Activated CD4-positive, alpha-beta T cell treated with anti-CD3 and anti-CD28 coated beads, Interleukin-2, amount 10 ng/mL, durations not matched to agents 24 days and 14 days (primary cell): ENCODE measurements at regions of chr15 and their contacts with region 1.

Region 1: GRCh38 chr15:72272213-72273002 is at the start of gene PARP6:
- DNase-seq: peak; percentile 100
- H3K4me3 Mint-ChIP-seq: peak within 1 kb of the TSS; percentile 94
- H3K27ac Mint-ChIP-seq: peak within 1 kb of the TSS; percentile 88
- H3K4me1 Mint-ChIP-seq: peaks cover 32% of the 10 kb centered on the region
- H3K27me3 Mint-ChIP-seq: peaks cover 3% of the 10 kb centered on the region
- total RNA-seq, gene PARP6: 69.7 and 78.6 TPM in 2 replicates

Region 2: DNA sequence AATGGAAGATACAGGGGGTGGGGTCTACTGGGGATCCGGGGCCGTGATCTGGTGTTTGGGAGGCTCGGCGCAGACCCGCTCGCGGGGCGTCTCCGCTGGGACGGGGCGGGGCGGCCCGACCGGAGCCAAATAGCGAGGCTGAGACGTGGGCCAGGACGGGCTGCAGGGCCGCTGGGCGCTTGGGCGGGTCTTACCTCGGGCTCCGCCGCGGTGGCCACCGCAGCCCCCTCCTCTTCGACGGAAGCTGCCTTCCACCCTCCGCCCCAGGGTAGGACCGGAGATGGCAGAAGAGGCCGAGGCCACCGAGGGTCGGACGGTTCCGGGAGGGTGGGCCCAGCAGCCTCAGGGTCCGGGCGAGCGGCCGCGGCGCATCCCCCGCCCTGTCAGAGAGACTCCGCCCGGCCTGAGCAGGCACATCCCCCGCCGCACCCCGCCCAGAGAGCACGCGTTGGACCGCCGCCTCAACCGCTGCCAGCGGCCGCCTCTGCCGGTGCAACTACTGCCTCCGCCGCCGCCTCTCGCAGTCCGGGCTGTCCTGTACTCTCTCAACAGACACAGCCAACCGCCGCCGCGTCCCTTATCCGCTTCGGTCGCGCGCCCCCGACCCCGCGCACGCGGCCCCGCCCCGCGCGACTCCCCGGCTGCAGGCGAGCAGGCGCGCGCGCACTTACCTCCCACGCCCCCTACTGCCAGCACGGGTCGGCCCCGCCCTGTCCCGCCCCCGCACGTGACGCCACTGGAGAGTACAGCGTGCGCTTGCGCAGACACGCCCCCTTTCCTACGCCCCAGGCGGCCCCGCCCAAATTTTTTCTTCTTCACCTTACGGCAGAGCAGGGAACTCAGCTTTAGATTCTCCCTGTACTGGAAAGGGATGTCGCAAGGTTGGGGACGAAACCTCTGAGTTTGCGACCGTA is 154.7 kb before region 1 on chr15 and contains the start of gene MYO9A:
- intact Hi-C with region 1: loop called (anchors 1 kb)
- DNase-seq: peak; percentile 98
- H3K4me3 Mint-ChIP-seq: peak within 1 kb of the TSS; percentile 95
- H3K27ac Mint-ChIP-seq: peak within 1 kb of the TSS; percentile 99
- H3K4me1 Mint-ChIP-seq: peaks cover 26% of the 10 kb centered on the region
- H3K27me3 Mint-ChIP-seq: peaks cover 17% of the 10 kb centered on the region
- total RNA-seq, gene MYO9A: 19.4 and 21.3 TPM in 2 replicates

Region 3: GRCh38 chr15:72199711-72200212 is 72.6 kb before region 1 on chr15:
- intact Hi-C with region 1: loop called (anchors 2 kb)
- DNase-seq: peak; percentile 92
- H3K4me3 Mint-ChIP-seq: no peak overlapping the region
- H3K27ac Mint-ChIP-seq: no peak overlapping the region
- H3K4me1 Mint-ChIP-seq: peaks cover 25% of the 10 kb centered on the region
- H3K27me3 Mint-ChIP-seq: peaks cover 9% of the 10 kb centered on the region

Region 4: GRCh38 chr15:72237286-72238224 is 34.9 kb before region 1 on chr15:
- intact Hi-C with region 1: loop called (anchors 1 kb)
- DNase-seq: peak; percentile 92
- H3K4me3 Mint-ChIP-seq: peak overlapping the region; percentile 84
- H3K27ac Mint-ChIP-seq: peak overlapping the region; percentile 95
- H3K4me1 Mint-ChIP-seq: peaks cover 41% of the 10 kb centered on the region
- H3K27me3 Mint-ChIP-seq: peaks cover 2% of the 10 kb centered on the region

Region 5: DNA sequence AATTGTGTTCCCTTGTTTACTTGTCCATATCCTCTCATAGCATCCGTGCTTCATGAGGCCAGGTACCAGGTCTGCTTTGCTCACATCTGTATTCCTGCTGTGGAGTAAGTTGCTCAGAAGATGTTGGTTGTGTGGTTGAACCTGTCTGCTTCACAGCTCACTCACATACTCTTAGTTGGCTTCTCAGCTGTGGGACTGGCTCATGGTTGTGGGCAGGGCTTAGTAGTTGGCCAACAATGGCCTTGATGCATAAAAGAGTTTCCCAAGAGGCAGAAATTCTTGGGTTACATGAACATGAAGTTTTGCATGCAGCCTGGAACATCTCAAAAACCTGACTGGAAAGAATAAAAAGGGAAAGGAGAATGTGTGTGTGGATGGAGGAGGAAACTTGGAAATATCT is 30.5 kb after region 1 on chr15:
- intact Hi-C with region 1: no loop called
- DNase-seq: no peak
- H3K4me3 Mint-ChIP-seq: no peak overlapping the region
- H3K27ac Mint-ChIP-seq: no peak overlapping the region
- H3K4me1 Mint-ChIP-seq: peaks cover 8% of the 10 kb centered on the region
- H3K27me3 Mint-ChIP-seq: no peaks in the 10 kb centered on the region

Region 6: DNA sequence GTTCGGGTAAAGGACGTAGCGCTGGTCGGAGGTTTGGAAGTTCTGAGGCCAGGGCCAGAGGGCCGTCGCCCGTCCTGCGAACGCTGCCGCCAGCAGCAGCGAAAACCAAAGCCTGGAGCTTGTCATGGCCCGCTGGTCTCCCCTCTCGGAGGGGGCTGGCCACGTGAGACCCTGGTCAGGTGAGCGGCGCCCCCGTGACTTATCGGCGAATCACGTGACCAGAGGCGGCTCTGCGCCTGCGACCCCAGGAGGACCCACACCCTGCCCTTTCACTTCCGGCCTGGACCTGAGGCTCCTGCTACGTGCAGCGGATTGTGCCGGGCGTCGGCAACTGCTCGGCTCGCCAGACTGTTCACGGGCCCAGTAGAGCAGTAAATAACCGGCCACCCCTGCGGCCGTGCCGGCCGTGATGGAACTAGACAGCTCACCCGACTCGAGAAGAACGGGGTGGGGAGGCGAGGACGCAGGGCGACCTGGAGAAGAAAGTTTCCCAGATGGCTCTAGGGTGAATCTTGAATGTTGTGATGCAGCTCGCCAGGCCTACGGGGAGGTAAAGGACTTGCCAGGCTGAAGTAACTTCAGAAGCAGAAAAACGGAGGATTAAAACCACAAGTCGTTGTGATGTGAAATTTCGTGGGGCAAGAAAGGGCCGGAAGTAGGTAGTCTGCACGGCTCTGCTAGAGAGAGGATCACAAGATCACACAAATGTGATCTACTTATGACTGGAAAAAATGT is 103.6 kb after region 1 on chr15 and contains the start of gene HEXA:
- intact Hi-C with region 1: loop called (anchors 1 kb)
- DNase-seq: peak; percentile 99
- H3K4me3 Mint-ChIP-seq: peak within 1 kb of the TSS; percentile 90
- H3K27ac Mint-ChIP-seq: peak within 1 kb of the TSS; percentile 91
- H3K4me1 Mint-ChIP-seq: peaks cover 31% of the 10 kb centered on the region
- H3K27me3 Mint-ChIP-seq: no peaks in the 10 kb centered on the region
- total RNA-seq, gene HEXA: 54.3 and 59.4 TPM in 2 replicates